Esophagus muscularis mucosa (tissue), 4 donors: ENCODE measurements at regions of chr4 and their contacts with region 1.

Region 1: DNA sequence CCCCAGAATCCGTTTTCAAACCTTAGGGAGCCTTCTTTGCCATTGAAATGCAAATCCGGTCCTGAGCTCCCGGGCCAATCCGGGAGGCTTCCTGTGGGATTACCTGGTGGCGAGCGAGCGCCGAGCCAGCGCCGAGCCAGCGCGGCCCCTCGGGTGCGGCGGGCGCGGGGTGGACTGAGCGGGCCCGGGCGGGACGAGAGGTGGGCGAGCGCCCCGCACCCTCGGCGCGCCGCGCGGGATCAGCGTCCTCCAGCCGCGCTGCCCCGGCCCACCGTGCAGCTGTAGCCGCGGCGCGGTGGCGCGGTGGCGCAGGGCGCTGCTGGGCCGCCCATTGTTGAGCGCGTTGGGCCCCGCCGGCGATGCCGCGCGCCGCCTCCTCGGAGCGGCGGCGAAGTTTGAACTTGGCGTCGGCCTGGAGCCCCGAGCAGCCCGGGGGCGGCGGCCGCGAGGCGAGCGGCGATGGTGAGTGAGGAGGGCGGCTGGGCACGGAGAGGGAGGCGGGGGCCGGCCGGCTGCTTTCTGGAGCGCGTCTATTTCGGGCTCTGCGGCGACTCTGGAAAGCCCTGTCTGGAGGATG is 208.6 kb downstream of the SOWAHB start:
- DNase-seq: no peak
- H3K4me3 ChIP-seq: peak overlapping the region; percentile 63 to 81 (median 71)
- H3K27ac ChIP-seq: peak overlapping the region; percentile 85 to 89 (median 87)
- H3K4me1 ChIP-seq: peaks cover 31 to 66% (median 60%) of the 10 kb centered on the region in 4 donors
- H3K27me3 ChIP-seq: no peaks in the 10 kb centered on the region
- CTCF ChIP-seq: no peak
- EP300 ChIP-seq: no peak
- POLR2A ChIP-seq: no peak

Region 2: GRCh38 chr4:76634239-76634638 is 55.1 kb before region 1 on chr4:
- intact Hi-C with region 1: loop called (anchors 5 kb)
- DNase-seq: no peak
- H3K4me3 ChIP-seq: no peak overlapping the region
- H3K27ac ChIP-seq: peak overlapping the region in 1 of 4 donors; percentile 17
- H3K4me1 ChIP-seq: peaks cover 0 to 11% (median 7%) of the 10 kb centered on the region in 4 donors
- H3K27me3 ChIP-seq: no peaks in the 10 kb centered on the region
- CTCF ChIP-seq: no peak
- EP300 ChIP-seq: no peak
- POLR2A ChIP-seq: no peak

Region 3: DNA sequence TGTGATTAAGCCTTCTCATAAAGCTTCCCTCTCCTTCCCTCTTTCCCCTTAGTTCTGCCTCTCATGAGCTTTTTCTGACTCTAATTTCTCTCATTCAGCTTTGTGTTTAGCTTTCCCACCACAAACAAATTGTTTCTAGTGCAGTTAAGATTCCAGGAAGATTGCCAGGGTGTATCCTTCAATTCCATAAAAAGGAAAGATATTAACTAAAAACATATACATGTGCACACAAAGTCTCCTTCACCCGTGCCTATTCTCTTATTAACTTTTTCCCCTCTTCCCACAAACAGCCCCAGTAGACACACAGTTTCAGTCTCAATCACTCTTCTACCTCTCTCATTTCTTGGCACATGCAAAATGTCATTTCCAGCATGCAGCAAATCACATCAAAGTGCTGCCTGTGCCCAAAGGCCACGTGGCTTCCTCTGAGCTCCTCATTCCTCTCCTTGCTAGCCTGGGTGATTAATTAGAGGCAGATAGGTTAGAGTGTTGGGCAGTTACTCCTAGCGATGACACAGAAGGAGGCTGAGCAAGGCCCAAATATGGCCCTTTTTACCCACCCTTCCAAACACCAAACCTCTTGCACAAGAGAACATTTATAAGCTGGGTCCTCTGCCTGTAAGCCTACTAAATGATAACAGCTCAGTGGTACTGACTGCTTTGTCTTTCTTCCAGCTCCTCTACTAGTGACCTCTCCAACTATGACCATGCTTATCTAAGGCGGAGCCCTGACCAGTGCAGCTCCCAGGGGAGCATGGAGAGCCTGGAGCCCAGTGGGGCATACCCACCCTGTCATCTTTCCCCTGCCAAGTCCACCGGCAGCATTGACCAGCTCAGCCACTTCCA is 49.0 kb after region 1 on chr4:
- intact Hi-C with region 1: no loop called
- DNase-seq: no peak
- H3K4me3 ChIP-seq: peak overlapping the region; percentile 1 to 19 (median 15)
- H3K27ac ChIP-seq: peak overlapping the region; percentile 89 to 94 (median 92)
- H3K4me1 ChIP-seq: peaks cover 18 to 75% (median 73%) of the 10 kb centered on the region in 4 donors
- H3K27me3 ChIP-seq: no peaks in the 10 kb centered on the region
- CTCF ChIP-seq: no peak
- EP300 ChIP-seq: peak; percentile 86
- POLR2A ChIP-seq: no peak

Region 4: GRCh38 chr4:76752861-76753501 is 63.7 kb after region 1 on chr4:
- intact Hi-C with region 1: loop called (anchors 5 kb)
- DNase-seq: peak; percentile 90
- H3K4me3 ChIP-seq: peak overlapping the region in 2 of 4 donors; percentile 20 to 25
- H3K27ac ChIP-seq: peak overlapping the region; percentile 36 to 58 (median 56)
- H3K4me1 ChIP-seq: peaks cover 7 to 51% (median 48%) of the 10 kb centered on the region in 4 donors
- H3K27me3 ChIP-seq: no peaks in the 10 kb centered on the region
- CTCF ChIP-seq: no peak
- EP300 ChIP-seq: no peak
- POLR2A ChIP-seq: no peak